HEK293 (cell line): ENCODE measurements at regions of chr5 and their contacts with region 1.

Region 1: GRCh38 chr5:133117166-133117911 is 65.5 kb downstream of the HSPA4 start:
- H3K4me3 ChIP-seq: no peak overlapping the region
- H3K27ac ChIP-seq: no peak overlapping the region
- H3K4me1 ChIP-seq: no peaks in the 10 kb centered on the region
- CTCF ChIP-seq: no peak

Region 2: GRCh38 chr5:133048993-133049725 is 68.2 kb before region 1 on chr5:
- CTCF ChIA-PET with region 1: no interaction called
- POLR2A ChIA-PET with region 1: no interaction called
- H3K4me3 ChIP-seq: no peak overlapping the region; the same call in 1 of the 2 replicates
- H3K27ac ChIP-seq: peak overlapping the region; percentile 2; the same call in 1 of the 2 replicates
- H3K4me1 ChIP-seq: peaks cover 19% of the 10 kb centered on the region
- CTCF ChIP-seq: no peak

Region 3: DNA sequence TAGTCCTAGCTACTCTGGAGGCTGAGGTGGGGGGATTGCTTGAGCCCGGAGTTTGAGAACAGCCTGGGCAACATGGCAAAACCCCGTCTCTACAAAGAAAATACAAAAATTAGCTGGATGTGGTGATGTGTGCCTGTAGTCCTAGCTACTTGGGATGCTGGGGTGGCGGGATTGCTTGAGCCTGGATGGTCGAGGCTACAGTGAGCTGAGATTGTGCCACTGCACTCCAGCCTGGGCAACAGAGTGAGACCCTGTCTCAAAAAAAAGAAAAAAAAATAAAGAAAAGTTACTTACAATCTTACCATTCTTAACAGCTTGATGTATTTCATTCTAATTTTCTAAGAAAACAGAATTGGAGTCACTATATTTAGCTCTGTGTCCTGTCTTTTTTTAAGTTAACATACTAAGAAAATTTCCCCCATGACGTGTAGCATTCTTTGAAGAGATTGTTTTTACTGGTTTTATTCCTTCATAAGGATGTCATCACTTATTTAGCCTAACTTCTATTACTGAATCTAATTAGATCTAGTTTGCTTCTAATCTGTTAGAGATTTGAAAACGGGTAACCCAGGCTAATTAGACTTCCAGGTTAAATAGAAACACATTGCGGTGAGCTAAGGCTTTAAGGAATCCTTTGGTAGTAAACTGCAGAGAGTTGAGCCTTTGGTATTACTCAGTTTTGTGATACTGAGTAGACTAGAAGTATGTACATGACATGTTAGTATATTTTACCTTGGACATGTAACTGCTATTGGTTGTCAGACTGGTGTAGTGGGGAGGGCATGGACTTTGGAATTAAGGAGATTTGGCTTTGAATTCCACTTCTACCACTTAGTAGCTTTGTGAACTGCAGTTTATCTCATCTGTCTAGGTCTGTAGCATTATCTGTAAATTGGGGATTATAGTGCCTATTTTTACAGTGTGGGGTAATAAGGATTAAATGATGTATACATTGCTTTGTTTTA is 41.5 kb before region 1 on chr5:
- CTCF ChIA-PET with region 1: no interaction called
- POLR2A ChIA-PET with region 1: interaction called, 10 read pairs
- H3K4me3 ChIP-seq: no peak overlapping the region
- H3K27ac ChIP-seq: no peak overlapping the region
- H3K4me1 ChIP-seq: peaks cover 2% of the 10 kb centered on the region; the same call in 1 of the 2 replicates
- CTCF ChIP-seq: no peak

Region 4: GRCh38 chr5:133353741-133354140 is 236.4 kb after region 1 on chr5:
- CTCF ChIA-PET with region 1: no interaction called
- POLR2A ChIA-PET with region 1: no interaction called
- H3K4me3 ChIP-seq: no peak overlapping the region
- H3K27ac ChIP-seq: no peak overlapping the region
- H3K4me1 ChIP-seq: no peaks in the 10 kb centered on the region
- CTCF ChIP-seq: no peak